Motor neuron (in vitro differentiated cells): ENCODE measurements at regions of chr22 and their contacts with region 1.

Region 1: GRCh38 chr22:41403532-41404318 is 22.0 kb downstream of the TEF start:
- ATAC-seq: peak; percentile 90 to 98 (median 96)
- H3K4me3 ChIP-seq: no peak overlapping the region
- H3K27ac ChIP-seq: no peak overlapping the region
- H3K4me1 ChIP-seq: no peaks in the 10 kb centered on the region

Region 2: GRCh38 chr22:41501209-41501608 is 97.5 kb after region 1 on chr22:
- in situ Hi-C with region 1: loop called in 1 of 9 experiments (anchors 10 kb)
- ATAC-seq: peak in 3 of 8 experiments; percentile 38 to 60 (median 52)
- H3K4me3 ChIP-seq: no peak overlapping the region
- H3K27ac ChIP-seq: no peak overlapping the region
- H3K4me1 ChIP-seq: no peaks in the 10 kb centered on the region

Region 3: GRCh38 chr22:41517172-41518047 is 113.7 kb after region 1 on chr22:
- in situ Hi-C with region 1: loop called in 3 of 9 experiments (anchors 10 kb)
- ATAC-seq: peak; percentile 10 to 43 (median 33)
- H3K4me3 ChIP-seq: no peak overlapping the region
- H3K27ac ChIP-seq: no peak overlapping the region
- H3K4me1 ChIP-seq: peaks cover 0 to 6% of the 10 kb centered on the region in 2 donors

Region 4: GRCh38 chr22:41565403-41566054 is 161.8 kb after region 1 on chr22:
- in situ Hi-C with region 1: no loop called
- ATAC-seq: peak in 4 of 8 experiments; percentile 3 to 87 (median 62)
- H3K4me3 ChIP-seq: no peak overlapping the region
- H3K27ac ChIP-seq: no peak overlapping the region
- H3K4me1 ChIP-seq: peaks cover 34 to 54% of the 10 kb centered on the region in 2 donors